ENCODE measurements at regions of chr20 and their contacts with region 1.

Region 1: GRCh38 chr20:45969347-45970242 is 2.4 kb downstream of the ZNF335 start:
- DNase-seq: peak in 1 of 2 donors; percentile 75
- H3K4me3 ChIP-seq: peak overlapping the region in 3 of 4 donors; percentile 77 to 96 (median 81)
- H3K27ac ChIP-seq: peak overlapping the region in 4 of 5 donors; percentile 99 to 100 (median 100)
- H3K4me1 ChIP-seq: peaks cover 13 to 40% (median 31%) of the 10 kb centered on the region in 4 donors
- H3K27me3 ChIP-seq: no peaks in the 10 kb centered on the region
- CTCF ChIP-seq: peak in 5 of 7 experiments; percentile 15 to 59 (median 49)
- EP300 ChIP-seq: no peak
- POLR2A ChIP-seq: no peak

Region 2: DNA sequence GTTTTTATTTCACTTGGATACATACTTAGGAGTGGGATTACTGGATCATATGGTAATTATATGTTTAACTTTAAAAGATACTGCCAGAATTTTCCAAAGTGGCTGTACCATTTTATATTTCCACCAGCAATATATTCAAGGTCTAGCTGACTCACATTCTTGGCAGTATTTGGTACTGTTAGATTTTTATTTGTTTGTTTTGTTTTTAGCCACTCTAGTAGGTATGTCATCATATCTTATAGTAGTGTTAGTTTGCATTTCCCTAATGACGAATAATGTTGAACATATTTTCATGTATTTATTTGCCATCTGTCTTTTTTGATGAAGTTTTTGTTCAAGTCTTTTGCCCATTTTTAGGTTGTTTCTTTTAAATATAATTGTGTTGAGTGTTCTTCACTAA is 586.5 kb before region 1 on chr20:
- intact Hi-C with region 1: no loop called
- DNase-seq: no peak
- H3K4me3 ChIP-seq: no peak overlapping the region
- H3K27ac ChIP-seq: no peak overlapping the region
- H3K4me1 ChIP-seq: no peaks in the 10 kb centered on the region
- H3K27me3 ChIP-seq: no peaks in the 10 kb centered on the region
- CTCF ChIP-seq: no peak
- EP300 ChIP-seq: no peak
- POLR2A ChIP-seq: no peak

Region 3: DNA sequence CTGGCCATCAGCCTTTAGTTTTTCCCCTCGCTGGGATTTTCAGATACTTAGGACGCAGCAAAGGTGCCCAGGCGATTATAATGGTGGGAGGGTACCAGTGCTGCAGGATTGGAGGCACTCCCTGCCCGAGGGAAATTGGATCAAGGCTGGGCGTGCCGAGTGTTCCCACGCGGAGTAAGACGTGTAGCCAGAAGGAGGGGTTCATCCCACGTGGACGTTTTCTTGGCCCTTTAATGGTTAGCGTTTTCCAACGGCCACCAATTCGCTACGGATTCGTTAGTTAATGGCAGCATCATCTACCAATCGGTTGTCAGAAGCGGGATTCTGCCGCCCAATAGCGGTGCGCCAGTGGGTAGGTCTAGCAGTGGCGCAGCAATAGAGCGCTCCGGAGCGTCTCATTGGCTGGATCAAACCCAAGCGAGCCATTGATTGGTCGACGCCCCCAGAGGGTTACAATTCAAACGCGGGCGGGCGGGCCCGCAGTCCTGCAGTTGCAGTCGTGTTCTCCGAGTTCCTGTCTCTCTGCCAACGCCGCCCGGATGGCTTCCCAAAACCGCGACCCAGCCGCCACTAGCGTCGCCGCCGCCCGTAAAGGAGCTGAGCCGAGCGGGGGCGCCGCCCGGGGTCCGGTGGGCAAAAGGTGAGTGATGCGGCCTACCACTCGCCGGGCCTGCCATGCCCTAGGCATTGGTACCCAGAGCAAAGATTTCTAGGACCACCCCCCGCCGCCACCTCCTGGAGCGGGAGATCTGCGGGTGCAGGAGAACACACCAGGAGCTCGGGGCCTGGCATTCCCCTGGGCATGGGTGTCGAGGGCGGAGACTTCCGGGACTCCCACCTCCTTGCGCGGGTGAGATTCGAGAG is 157.2 kb before region 1 on chr20 and contains the start of gene UBE2C:
- intact Hi-C with region 1: loop called (anchors 10 kb)
- DNase-seq: peak; percentile 98 to 100
- H3K4me3 ChIP-seq: peak within 1 kb of the TSS; percentile 53 to 82 (median 66)
- H3K27ac ChIP-seq: peak within 1 kb of the TSS; percentile 39 to 73 (median 56)
- H3K4me1 ChIP-seq: peaks cover 6 to 30% (median 15%) of the 10 kb centered on the region in 4 donors
- H3K27me3 ChIP-seq: no peaks in the 10 kb centered on the region
- CTCF ChIP-seq: no peak
- EP300 ChIP-seq: no peak
- POLR2A ChIP-seq: no peak
- total RNA-seq, gene UBE2C: 10.5 to 37.5 (median 13.4) TPM in 4 of 5 donors, not detected in the other